PC-9 (cell line): ENCODE measurements at regions of chr2 and their contacts with region 1.

Region 1: GRCh38 chr2:9675415-9676351 is 44.9 kb upstream of the YWHAQ start:
- DNase-seq: peak; percentile 29 to 98
- H3K4me3 ChIP-seq: peak overlapping the region; percentile 40; the same call in 1 of the 2 replicates
- H3K27ac ChIP-seq: peak overlapping the region; percentile 60
- H3K4me1 ChIP-seq: peaks cover 23% of the 10 kb centered on the region
- H3K27me3 ChIP-seq: no peaks in the 10 kb centered on the region
- CTCF ChIP-seq: no peak

Region 2: DNA sequence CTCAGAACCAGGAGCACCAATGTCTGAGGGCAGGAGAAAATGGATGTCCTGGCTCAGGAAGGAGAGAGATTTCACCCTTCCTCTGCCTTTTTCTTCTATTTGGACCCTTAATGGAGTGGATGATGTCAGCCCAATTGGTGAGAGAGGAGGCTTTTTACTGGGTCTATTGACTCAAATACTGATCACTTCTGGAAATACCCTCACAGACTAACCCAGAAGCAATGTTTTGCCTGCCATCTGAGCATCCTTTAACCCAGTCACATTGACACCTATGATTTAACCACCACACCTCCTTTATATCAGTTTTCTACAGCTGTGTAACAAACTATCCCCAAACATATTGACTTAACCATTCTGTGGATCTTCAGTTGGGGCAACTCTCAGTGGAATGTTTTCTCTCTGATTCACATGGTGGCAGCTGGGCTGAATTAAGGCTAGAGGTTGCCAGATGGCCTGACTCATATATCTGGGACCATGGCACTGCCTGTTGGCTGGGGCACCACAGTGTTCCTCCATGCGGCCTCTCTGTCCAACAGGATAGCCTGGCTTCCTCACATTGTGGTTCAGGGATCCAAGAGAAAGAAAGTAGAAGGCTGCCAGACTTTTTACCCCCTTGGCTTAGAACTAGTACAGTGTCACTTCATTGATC is 654.0 kb before region 1 on chr2:
- CTCF ChIA-PET with region 1: no interaction called
- POLR2A ChIA-PET with region 1: interaction called, 22 read pairs
- intact Hi-C with region 1: no loop called
- DNase-seq: no peak
- H3K4me3 ChIP-seq: no peak overlapping the region
- H3K27ac ChIP-seq: no peak overlapping the region
- H3K4me1 ChIP-seq: peaks cover 12% of the 10 kb centered on the region; the same call in 1 of the 2 replicates
- H3K27me3 ChIP-seq: no peaks in the 10 kb centered on the region
- CTCF ChIP-seq: no peak

Region 3: GRCh38 chr2:9278439-9278838 is 397.2 kb before region 1 on chr2:
- CTCF ChIA-PET with region 1: no interaction called
- POLR2A ChIA-PET with region 1: no interaction called
- intact Hi-C with region 1: no loop called
- DNase-seq: no peak
- H3K4me3 ChIP-seq: no peak overlapping the region
- H3K27ac ChIP-seq: no peak overlapping the region
- H3K4me1 ChIP-seq: peaks cover 22% of the 10 kb centered on the region
- H3K27me3 ChIP-seq: no peaks in the 10 kb centered on the region
- CTCF ChIP-seq: no peak; the same call in 1 of the 2 replicates

Region 4: GRCh38 chr2:9820020-9820419 is 144.3 kb after region 1 on chr2:
- CTCF ChIA-PET with region 1: no interaction called
- POLR2A ChIA-PET with region 1: interaction called, 13 read pairs
- intact Hi-C with region 1: no loop called
- DNase-seq: peak; percentile 71 to 92
- H3K4me3 ChIP-seq: no peak overlapping the region
- H3K27ac ChIP-seq: peak overlapping the region; percentile 57
- H3K4me1 ChIP-seq: peaks cover 28% of the 10 kb centered on the region
- H3K27me3 ChIP-seq: no peaks in the 10 kb centered on the region
- CTCF ChIP-seq: no peak

Region 5: GRCh38 chr2:9984217-9984739 is 308.6 kb after region 1 on chr2:
- CTCF ChIA-PET with region 1: no interaction called
- POLR2A ChIA-PET with region 1: no interaction called
- intact Hi-C with region 1: no loop called
- DNase-seq: no peak
- H3K4me3 ChIP-seq: no peak overlapping the region
- H3K27ac ChIP-seq: 0 out of 2 replicates have a peak overlapping the region, but pooled peaks have one; percentile 47
- H3K4me1 ChIP-seq: peaks cover 10% of the 10 kb centered on the region
- H3K27me3 ChIP-seq: no peaks in the 10 kb centered on the region
- CTCF ChIP-seq: peak; percentile 93

Region 6: DNA sequence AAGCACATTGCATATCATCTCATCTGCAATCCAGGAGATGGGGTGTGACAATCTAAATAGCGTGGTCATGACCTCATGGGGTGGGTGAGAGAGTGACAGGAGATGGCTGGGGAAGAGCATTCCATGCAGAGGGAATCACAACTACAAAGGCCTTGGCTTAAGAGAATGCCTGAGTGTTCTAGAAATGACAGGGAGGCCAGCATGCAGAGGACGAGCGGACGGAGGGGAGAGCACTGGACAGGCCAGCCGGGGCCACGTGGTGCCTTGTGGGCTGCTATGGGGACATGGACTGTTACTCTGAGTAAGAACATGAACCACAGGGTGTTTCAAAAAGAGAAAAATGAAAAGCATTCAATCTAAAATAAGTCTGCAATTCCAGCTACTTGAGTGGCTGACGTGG is 890.3 kb after region 1 on chr2:
- CTCF ChIA-PET with region 1: no interaction called
- POLR2A ChIA-PET with region 1: no interaction called
- intact Hi-C with region 1: no loop called
- DNase-seq: no peak
- H3K4me3 ChIP-seq: no peak overlapping the region
- H3K27ac ChIP-seq: no peak overlapping the region
- H3K4me1 ChIP-seq: no peaks in the 10 kb centered on the region; the same call in 1 of the 2 replicates
- H3K27me3 ChIP-seq: no peaks in the 10 kb centered on the region
- CTCF ChIP-seq: no peak